Naive thymus-derived CD4-positive, alpha-beta T cell (primary cell): ENCODE measurements at regions of chr17 and their contacts with region 1.

Region 1: DNA sequence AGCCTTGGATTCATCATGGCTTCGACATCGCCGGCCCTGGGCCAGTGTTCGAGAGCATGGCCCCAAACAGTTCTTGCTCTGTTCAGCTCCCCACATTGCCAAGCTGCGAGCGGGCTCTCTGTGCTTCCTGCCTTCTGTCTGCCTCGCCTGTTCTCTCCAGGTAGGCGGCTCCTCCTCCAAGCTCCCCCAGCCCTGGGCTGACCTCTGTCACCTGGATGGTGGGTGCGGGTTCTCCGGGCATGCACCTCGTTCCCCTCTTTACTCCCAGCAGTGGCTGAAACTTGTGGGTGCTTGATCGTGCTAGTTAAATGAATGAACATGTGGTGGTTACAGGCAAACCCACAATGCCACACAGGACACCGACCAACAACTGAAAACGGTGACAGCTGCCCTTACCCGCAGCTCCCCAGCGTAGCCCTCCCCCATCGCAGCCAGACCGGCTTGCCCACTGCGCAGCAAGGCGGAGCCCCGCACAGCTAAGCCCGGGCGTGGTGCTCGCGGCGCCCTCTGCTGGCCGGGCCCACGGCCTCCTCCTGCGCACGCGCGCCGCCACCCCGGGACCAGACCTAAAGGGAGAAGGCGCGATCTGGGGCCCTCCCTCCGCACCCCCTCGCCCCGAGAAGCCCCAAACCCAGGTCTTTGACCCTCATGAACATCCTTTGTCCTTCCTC is 23.0 kb upstream of the EIF1 start:
- DNase-seq: peak; percentile 81 to 96 (median 90)
- ATAC-seq: peak; percentile 87
- H3K4me3 ChIP-seq: peak overlapping the region; percentile 87
- H3K4me3 Mint-ChIP-seq: peak overlapping the region; percentile 85 to 95 (median 92)
- H3K27ac ChIP-seq: peak overlapping the region; percentile 97
- H3K27ac Mint-ChIP-seq: peak overlapping the region; percentile 88 to 100 (median 96)
- H3K4me1 ChIP-seq: peaks cover 4 to 7% of the 10 kb centered on the region in 2 donors
- H3K4me1 Mint-ChIP-seq: peaks cover 17 to 54% (median 21%) of the 10 kb centered on the region in 7 donors
- H3K27me3 ChIP-seq: no peaks in the 10 kb centered on the region
- H3K27me3 Mint-ChIP-seq: peaks cover 0 to 13% (median 0%) of the 10 kb centered on the region in 5 donors

Region 2: DNA sequence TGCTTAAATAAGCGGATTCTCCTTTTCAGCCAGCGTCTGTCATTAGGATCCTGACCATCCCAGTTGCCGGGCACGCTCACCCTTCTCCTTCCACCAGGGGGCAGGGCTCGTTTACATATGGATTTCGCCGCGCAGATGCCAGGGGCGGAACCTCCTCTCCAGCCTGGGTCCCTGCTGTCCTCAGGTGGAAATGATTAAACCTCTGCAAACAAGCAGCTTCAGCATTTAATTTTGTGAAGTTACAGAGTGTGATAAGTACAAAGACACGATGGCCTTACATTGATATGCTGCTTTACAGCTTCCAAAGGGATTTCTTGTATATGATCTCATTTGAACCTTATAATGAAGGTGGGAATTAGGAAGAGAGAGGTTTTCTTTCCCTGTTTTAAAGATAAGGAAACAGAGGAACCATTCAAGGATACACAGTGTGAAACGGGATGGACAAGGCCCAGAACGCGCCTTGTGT is 862.1 kb before region 1 on chr17:
- CTCF ChIA-PET with region 1: interaction called, 9 read pairs
- POLR2A ChIA-PET with region 1: no interaction called
- intact Hi-C with region 1: loop called (anchors 1 kb)
- DNase-seq: peak; percentile 34 to 74 (median 54)
- ATAC-seq: peak; percentile 90
- H3K4me3 ChIP-seq: no peak overlapping the region
- H3K4me3 Mint-ChIP-seq: peak overlapping the region in 1 of 10 donors; percentile 33
- H3K27ac ChIP-seq: no peak overlapping the region
- H3K27ac Mint-ChIP-seq: no peak overlapping the region
- H3K4me1 ChIP-seq: no peaks in the 10 kb centered on the region
- H3K4me1 Mint-ChIP-seq: peaks cover 0 to 4% (median 3%) of the 10 kb centered on the region in 7 donors
- H3K27me3 ChIP-seq: peaks cover 0 to 4% of the 10 kb centered on the region in 2 donors
- H3K27me3 Mint-ChIP-seq: peaks cover 33 to 51% (median 48%) of the 10 kb centered on the region in 5 donors

Region 3: DNA sequence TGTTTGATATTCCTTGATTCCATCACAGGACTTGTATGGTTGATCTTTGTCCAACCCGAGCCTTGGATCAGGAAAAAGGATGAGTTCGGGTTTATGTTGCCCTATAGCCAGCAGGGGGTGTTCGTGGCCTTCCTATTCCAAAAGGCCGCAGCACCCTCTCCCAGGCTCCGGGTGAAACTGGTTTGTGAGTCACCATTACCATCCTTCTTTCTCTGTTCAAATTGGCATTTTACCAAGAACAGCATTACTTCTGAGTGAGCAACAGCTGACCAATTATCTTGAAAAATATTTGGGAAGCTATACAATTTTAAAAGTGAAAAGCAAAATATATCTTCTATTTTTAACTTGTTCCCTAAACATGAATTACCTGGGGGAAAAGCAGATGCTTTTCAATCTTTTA is 756.4 kb before region 1 on chr17:
- CTCF ChIA-PET with region 1: interaction called, 28 read pairs
- POLR2A ChIA-PET with region 1: interaction called, 3 read pairs
- intact Hi-C with region 1: loop called (anchors 1 kb)
- DNase-seq: peak; percentile 29 to 70 (median 56)
- ATAC-seq: peak; percentile 93
- H3K4me3 ChIP-seq: no peak overlapping the region
- H3K4me3 Mint-ChIP-seq: no peak overlapping the region
- H3K27ac ChIP-seq: no peak overlapping the region
- H3K27ac Mint-ChIP-seq: no peak overlapping the region
- H3K4me1 ChIP-seq: no peaks in the 10 kb centered on the region
- H3K4me1 Mint-ChIP-seq: no peaks in the 10 kb centered on the region
- H3K27me3 ChIP-seq: peaks cover 5 to 7% of the 10 kb centered on the region in 2 donors
- H3K27me3 Mint-ChIP-seq: peaks cover 26 to 45% (median 36%) of the 10 kb centered on the region in 5 donors

Region 4: DNA sequence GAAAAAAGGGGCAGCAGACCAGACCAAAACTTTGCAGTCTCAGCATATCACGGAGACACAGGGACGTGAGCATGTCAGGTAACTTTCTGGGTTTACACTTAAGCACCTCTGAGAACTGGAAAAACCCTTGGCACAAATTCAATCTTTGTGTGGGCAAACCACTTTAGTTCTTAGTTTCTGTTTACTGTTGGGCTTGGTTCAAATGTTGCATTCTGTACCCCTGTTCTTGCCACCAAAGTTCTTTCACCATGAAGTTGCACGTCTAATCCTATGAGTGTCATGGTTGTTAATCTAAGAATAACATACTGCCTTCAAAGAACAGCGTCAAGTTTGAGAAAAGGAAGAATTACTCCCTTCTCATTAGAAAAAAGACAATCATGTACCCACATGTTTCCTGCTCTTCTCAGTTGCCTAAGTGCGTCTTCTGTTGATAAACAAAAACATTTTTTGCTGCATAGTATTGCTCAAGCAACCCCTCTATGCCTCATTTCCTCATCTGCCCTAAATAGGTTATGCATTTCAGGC is 326.7 kb before region 1 on chr17:
- CTCF ChIA-PET with region 1: no interaction called
- POLR2A ChIA-PET with region 1: no interaction called
- intact Hi-C with region 1: loop called in 1 of 2 experiments (anchors 2 kb)
- DNase-seq: peak in 7 of 9 donors; percentile 71 to 93 (median 88)
- ATAC-seq: peak; percentile 90
- H3K4me3 ChIP-seq: no peak overlapping the region
- H3K4me3 Mint-ChIP-seq: peak overlapping the region; percentile 28 to 81 (median 74)
- H3K27ac ChIP-seq: peak overlapping the region; percentile 87
- H3K27ac Mint-ChIP-seq: peak overlapping the region; percentile 92 to 99 (median 96)
- H3K4me1 ChIP-seq: peaks cover 78 to 85% of the 10 kb centered on the region in 2 donors
- H3K4me1 Mint-ChIP-seq: peaks cover 47 to 99% (median 85%) of the 10 kb centered on the region in 7 donors
- H3K27me3 ChIP-seq: no peaks in the 10 kb centered on the region
- H3K27me3 Mint-ChIP-seq: peaks cover 0 to 14% (median 0%) of the 10 kb centered on the region in 5 donors

Region 5: GRCh38 chr17:41648411-41649195 is 17.1 kb before region 1 on chr17:
- CTCF ChIA-PET with region 1: interaction called, 125 read pairs
- POLR2A ChIA-PET with region 1: interaction called, 38 read pairs
- intact Hi-C with region 1: loop called (anchors 1 kb)
- DNase-seq: peak; percentile 70 to 93 (median 83)
- ATAC-seq: peak; percentile 93
- H3K4me3 ChIP-seq: peak overlapping the region; percentile 87
- H3K4me3 Mint-ChIP-seq: peak overlapping the region in 9 of 10 donors; percentile 63 to 86 (median 81)
- H3K27ac ChIP-seq: peak overlapping the region; percentile 24
- H3K27ac Mint-ChIP-seq: peak overlapping the region in 7 of 9 donors; percentile 28 to 82 (median 77)
- H3K4me1 ChIP-seq: peaks cover 8 to 12% of the 10 kb centered on the region in 2 donors
- H3K4me1 Mint-ChIP-seq: peaks cover 6 to 14% (median 9%) of the 10 kb centered on the region in 7 donors
- H3K27me3 ChIP-seq: no peaks in the 10 kb centered on the region
- H3K27me3 Mint-ChIP-seq: no peaks in the 10 kb centered on the region

Region 6: GRCh38 chr17:41695954-41696756 is 30.5 kb after region 1 on chr17:
- CTCF ChIA-PET with region 1: interaction called, 74 read pairs
- POLR2A ChIA-PET with region 1: interaction called, 155 read pairs
- intact Hi-C with region 1: loop called in 1 of 2 experiments (anchors 1 kb)
- DNase-seq: peak; percentile 52 to 81 (median 74)
- ATAC-seq: peak; percentile 56
- H3K4me3 ChIP-seq: no peak overlapping the region
- H3K4me3 Mint-ChIP-seq: peak overlapping the region in 1 of 10 donors; percentile 3
- H3K27ac ChIP-seq: no peak overlapping the region
- H3K27ac Mint-ChIP-seq: peak overlapping the region; percentile 19 to 91 (median 68)
- H3K4me1 ChIP-seq: peaks cover under 1 to 8% of the 10 kb centered on the region in 2 donors
- H3K4me1 Mint-ChIP-seq: peaks cover 10 to 33% (median 25%) of the 10 kb centered on the region in 7 donors
- H3K27me3 ChIP-seq: no peaks in the 10 kb centered on the region
- H3K27me3 Mint-ChIP-seq: no peaks in the 10 kb centered on the region